IMR-90 (cell line): ENCODE measurements at regions of chr11 and their contacts with region 1.

Region 1: GRCh38 chr11:102495161-102496042 is 35.1 kb downstream of the MMP7 start:
- DNase-seq: peak; percentile 88
- ATAC-seq: peak; percentile 91
- H3K4me3 ChIP-seq: no peak overlapping the region
- H3K27ac ChIP-seq: no peak overlapping the region
- H3K4me1 ChIP-seq: peaks cover 3% of the 10 kb centered on the region; the same call in 1 of the 2 replicates
- H3K27me3 ChIP-seq: no peaks in the 10 kb centered on the region
- CTCF ChIP-seq: peak; percentile 81
- POLR2A ChIP-seq: no peak
- RAD21 ChIP-seq: peak; percentile 88

Region 2: GRCh38 chr11:101436511-101437142 is 1058.8 kb before region 1 on chr11:
- CTCF ChIA-PET with region 1: no interaction called
- POLR2A ChIA-PET with region 1: no interaction called
- dilution Hi-C with region 1: no loop called
- in situ Hi-C with region 1: loop called (anchors 25 kb)
- intact Hi-C with region 1: no loop called
- DNase-seq: peak; percentile 49
- ATAC-seq: peak; percentile 68
- H3K4me3 ChIP-seq: no peak overlapping the region
- H3K27ac ChIP-seq: no peak overlapping the region
- H3K4me1 ChIP-seq: peaks cover 2% of the 10 kb centered on the region
- H3K27me3 ChIP-seq: no peaks in the 10 kb centered on the region
- CTCF ChIP-seq: peak; percentile 63
- POLR2A ChIP-seq: no peak
- RAD21 ChIP-seq: peak; percentile 55

Region 3: DNA sequence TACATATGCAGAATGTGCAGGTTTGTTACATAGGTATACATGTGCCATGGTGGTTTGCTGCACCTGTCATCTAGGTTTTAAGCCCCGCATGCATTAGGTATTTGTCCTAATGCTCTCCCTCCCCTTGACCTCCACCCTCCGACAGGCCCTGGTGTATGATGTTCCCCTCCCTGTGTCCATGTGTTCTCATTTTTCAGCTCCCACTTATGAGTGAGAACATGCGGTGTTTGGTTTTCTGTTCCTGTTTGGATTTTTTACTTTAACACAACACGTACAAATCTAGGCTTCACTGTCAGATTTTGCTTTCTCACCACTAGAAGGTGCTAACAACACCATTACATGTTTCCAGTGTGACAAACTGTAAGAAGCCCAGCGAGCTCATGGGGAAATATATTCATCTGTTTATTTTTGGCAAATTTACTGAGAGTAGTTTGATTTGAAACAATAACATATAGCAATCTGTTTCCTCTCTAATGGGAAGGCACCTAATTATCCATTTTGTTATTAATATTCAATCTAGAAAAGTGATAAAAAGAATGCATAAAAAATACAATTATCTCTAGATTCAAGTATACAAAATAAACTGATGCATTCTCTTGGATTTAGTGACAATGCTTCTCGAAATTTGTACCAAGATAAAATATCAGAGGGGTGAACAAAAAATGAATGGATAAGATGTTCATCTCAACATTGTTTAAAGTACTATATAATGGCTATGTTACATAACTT is 201.4 kb before region 1 on chr11:
- CTCF ChIA-PET with region 1: no interaction called
- POLR2A ChIA-PET with region 1: interaction called, 3 read pairs
- dilution Hi-C with region 1: no loop called
- in situ Hi-C with region 1: loop called (anchors 5 kb)
- intact Hi-C with region 1: loop called (anchors 1 kb)
- DNase-seq: peak; percentile 66
- ATAC-seq: peak; percentile 77
- H3K4me3 ChIP-seq: no peak overlapping the region
- H3K27ac ChIP-seq: no peak overlapping the region
- H3K4me1 ChIP-seq: peaks cover 5% of the 10 kb centered on the region
- H3K27me3 ChIP-seq: no peaks in the 10 kb centered on the region
- CTCF ChIP-seq: peak; percentile 61
- POLR2A ChIP-seq: no peak
- RAD21 ChIP-seq: peak; percentile 44

Region 4: DNA sequence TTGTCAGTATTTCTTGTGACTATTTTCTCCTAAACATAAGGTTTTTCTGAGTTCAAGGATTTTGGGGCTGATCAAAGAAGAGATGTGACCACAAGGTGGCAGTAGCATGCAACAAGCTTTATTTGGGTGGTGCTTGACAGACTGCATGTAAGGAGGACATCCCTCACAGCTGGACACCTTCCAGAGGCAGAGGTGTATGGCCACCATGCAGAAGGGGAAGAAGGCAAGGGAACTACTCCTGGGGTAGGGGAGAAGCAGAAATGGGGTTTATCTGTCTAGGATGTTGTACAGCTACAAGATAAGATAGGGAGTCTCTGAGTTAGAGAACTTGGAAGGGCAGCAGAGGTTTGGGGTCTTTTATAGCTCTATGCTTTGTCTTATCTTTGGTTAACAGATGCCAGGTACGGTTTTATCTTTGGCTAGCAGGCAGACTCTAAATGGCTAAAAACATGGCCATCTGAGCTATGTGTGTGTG is 153.5 kb before region 1 on chr11:
- CTCF ChIA-PET with region 1: interaction called, 6 read pairs
- POLR2A ChIA-PET with region 1: interaction called, 3 read pairs
- dilution Hi-C with region 1: no loop called
- in situ Hi-C with region 1: no loop called
- intact Hi-C with region 1: loop called (anchors 1 kb)
- DNase-seq: peak; percentile 87
- ATAC-seq: peak; percentile 63
- H3K4me3 ChIP-seq: no peak overlapping the region
- H3K27ac ChIP-seq: no peak overlapping the region
- H3K4me1 ChIP-seq: no peaks in the 10 kb centered on the region; the same call in 1 of the 2 replicates
- H3K27me3 ChIP-seq: no peaks in the 10 kb centered on the region
- CTCF ChIP-seq: peak; percentile 85
- POLR2A ChIP-seq: no peak
- RAD21 ChIP-seq: peak; percentile 74

Region 5: GRCh38 chr11:102346748-102347461 is 148.5 kb before region 1 on chr11 and contains the start of gene BIRC2:
- CTCF ChIA-PET with region 1: interaction called, 6 read pairs
- POLR2A ChIA-PET with region 1: interaction called, 3 read pairs
- dilution Hi-C with region 1: no loop called
- in situ Hi-C with region 1: no loop called
- intact Hi-C with region 1: loop called (anchors 1 kb)
- DNase-seq: peak; percentile 89
- ATAC-seq: peak; percentile 91
- H3K4me3 ChIP-seq: peak within 1 kb of the TSS; percentile 81
- H3K27ac ChIP-seq: peak within 1 kb of the TSS; percentile 95
- H3K4me1 ChIP-seq: no peaks in the 10 kb centered on the region; the same call in 1 of the 2 replicates
- H3K27me3 ChIP-seq: no peaks in the 10 kb centered on the region
- CTCF ChIP-seq: peak; percentile 94
- POLR2A ChIP-seq: peak; percentile 84
- RAD21 ChIP-seq: peak; percentile 36
- total RNA-seq, gene BIRC2: 112 and 204 TPM in 2 replicates

Region 6: DNA sequence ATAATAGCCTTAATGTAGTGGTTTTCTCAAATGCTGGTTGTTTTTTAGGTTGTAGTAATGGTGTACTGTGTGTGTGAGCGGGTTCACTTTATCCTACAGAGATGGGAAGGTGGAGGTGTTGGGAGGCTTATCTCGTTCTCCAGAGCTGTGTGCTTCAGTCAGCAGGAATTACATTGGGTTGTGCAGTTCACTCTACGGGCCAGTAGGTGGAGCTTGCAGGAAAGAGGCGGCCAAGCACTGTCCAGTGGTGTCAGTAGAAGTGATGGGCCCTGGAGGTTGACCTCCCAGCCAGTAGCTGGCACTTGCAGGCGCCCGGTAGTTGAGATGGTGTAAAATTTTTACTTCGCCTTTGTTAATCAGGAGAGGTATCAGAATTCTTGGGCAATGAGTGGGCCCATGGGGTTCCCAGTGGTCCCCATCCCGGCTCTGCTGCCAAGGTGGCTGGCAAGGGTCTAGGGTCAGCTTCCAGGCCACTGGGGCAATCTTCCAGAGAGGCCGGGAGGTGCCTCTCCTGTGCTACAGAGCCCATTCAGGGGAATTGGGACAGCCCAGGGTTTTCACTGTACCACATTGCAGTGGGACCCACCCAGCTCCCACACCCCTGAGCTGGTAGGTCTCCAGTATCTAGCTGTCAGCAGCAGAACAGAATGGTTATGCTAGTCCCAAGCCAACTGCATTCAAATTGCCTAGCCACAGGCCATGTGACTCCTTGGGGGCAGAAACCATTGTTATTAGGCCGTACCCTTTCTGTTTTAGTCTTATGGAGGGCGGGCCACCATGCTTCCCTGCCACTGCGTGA is 104.5 kb before region 1 on chr11:
- CTCF ChIA-PET with region 1: interaction called, 8 read pairs
- POLR2A ChIA-PET with region 1: no interaction called
- dilution Hi-C with region 1: no loop called
- in situ Hi-C with region 1: loop called (anchors 5 kb)
- intact Hi-C with region 1: loop called (anchors 1 kb)
- DNase-seq: peak; percentile 63
- ATAC-seq: peak; percentile 97
- H3K4me3 ChIP-seq: no peak overlapping the region
- H3K27ac ChIP-seq: no peak overlapping the region
- H3K4me1 ChIP-seq: peaks cover under 1% of the 10 kb centered on the region; the same call in 1 of the 2 replicates
- H3K27me3 ChIP-seq: no peaks in the 10 kb centered on the region
- CTCF ChIP-seq: peak; percentile 77
- POLR2A ChIP-seq: no peak
- RAD21 ChIP-seq: peak; percentile 70

Region 7: DNA sequence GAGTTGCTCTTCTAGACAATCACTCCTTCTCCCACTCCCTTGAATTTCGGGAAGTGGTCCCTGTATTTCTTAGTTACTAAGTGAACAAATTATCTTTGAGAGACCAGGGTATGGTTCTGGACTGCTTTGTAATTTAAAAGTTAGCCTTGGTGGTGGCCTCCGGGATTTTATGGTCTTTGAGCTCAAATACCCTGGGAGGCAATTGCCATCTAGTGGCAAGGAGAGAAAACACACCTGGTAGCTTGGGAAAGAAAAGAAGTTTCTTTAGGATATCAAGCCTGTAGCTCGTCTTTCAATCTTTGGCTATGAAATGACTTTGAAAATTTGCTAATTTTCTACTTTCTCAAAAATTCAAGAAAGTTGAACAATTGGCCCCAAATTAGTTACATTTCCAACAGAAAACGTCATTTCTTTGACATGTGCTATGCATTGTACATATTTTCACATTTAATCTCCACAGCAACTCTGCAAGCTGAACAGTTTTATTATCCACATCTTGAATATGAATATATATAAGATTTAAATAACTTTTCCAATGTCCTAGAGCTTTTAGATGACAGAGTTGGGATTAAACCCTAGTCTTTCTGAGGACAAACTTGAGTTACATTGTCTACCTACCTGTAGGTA is 171.0 kb after region 1 on chr11:
- CTCF ChIA-PET with region 1: interaction called, 3 read pairs
- POLR2A ChIA-PET with region 1: no interaction called
- dilution Hi-C with region 1: no loop called
- in situ Hi-C with region 1: no loop called
- intact Hi-C with region 1: loop called (anchors 1 kb)
- DNase-seq: peak; percentile 60
- ATAC-seq: peak; percentile 95
- H3K4me3 ChIP-seq: no peak overlapping the region
- H3K27ac ChIP-seq: no peak overlapping the region
- H3K4me1 ChIP-seq: no peaks in the 10 kb centered on the region
- H3K27me3 ChIP-seq: peaks cover 3% of the 10 kb centered on the region; the same call in 1 of the 2 replicates
- CTCF ChIP-seq: peak; percentile 92
- POLR2A ChIP-seq: 0 out of 2 replicates have a peak, but pooled peaks have one; percentile 27
- RAD21 ChIP-seq: peak; percentile 94

Region 8: GRCh38 chr11:102831489-102832440 is 336.4 kb after region 1 on chr11:
- CTCF ChIA-PET with region 1: no interaction called
- POLR2A ChIA-PET with region 1: no interaction called
- dilution Hi-C with region 1: no loop called
- in situ Hi-C with region 1: no loop called
- intact Hi-C with region 1: no loop called
- DNase-seq: peak; percentile 23
- ATAC-seq: peak; percentile 54; the same call in 1 of the 2 replicates
- H3K4me3 ChIP-seq: peak overlapping the region; percentile 49
- H3K27ac ChIP-seq: no peak overlapping the region
- H3K4me1 ChIP-seq: no peaks in the 10 kb centered on the region; the same call in 1 of the 2 replicates
- H3K27me3 ChIP-seq: no peaks in the 10 kb centered on the region; the same call in 1 of the 2 replicates
- CTCF ChIP-seq: peak; percentile 58
- POLR2A ChIP-seq: no peak
- RAD21 ChIP-seq: peak; percentile 59